Activated CD4-positive, alpha-beta T cell treated with anti-CD3 and anti-CD28 coated beads, Interleukin-2, amount 10 ng/mL, durations not matched to agents 7 days and 5 days (primary cell): ENCODE measurements at regions of chr6 and their contacts with region 1.

Region 1: DNA sequence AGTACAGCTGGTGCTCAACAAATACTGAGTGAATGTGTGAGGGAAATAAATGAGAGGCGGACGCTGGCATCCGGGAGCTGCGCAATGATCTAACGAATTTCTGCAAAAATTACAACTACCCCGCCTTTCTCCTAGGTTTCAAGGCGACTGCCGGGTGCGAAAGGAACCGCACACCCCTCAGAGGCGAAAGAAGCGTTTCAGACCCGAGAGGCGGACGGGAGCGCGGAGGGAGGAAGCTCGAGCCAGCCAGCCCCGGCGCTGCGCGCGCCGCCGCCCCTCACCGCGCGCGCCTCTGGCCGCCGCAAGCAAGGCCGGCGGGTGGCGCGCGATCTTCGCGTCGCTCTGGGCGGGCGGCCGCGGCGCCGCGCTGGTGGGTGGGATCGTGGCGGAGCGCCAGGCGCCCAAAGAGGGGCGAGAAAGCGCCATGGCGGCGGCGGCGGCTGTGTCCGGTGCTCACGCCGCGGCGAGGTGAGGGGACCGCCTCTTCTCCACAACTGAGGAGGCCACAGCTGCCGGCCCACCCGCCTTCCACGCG is at the start of gene BLTP3A:
- DNase-seq: peak; percentile 72
- H3K4me3 Mint-ChIP-seq: peak within 1 kb of the TSS; percentile 89
- H3K27ac Mint-ChIP-seq: peak within 1 kb of the TSS; percentile 97
- H3K4me1 Mint-ChIP-seq: peaks cover 17% of the 10 kb centered on the region
- H3K27me3 Mint-ChIP-seq: no peaks in the 10 kb centered on the region
- total RNA-seq, gene BLTP3A: 11.4 to 13.8 TPM

Region 2: GRCh38 chr6:34773916-34774315 is 17.9 kb before region 1 on chr6:
- CTCF ChIA-PET with region 1: interaction called, 15 read pairs
- POLR2A ChIA-PET with region 1: no interaction called
- DNase-seq: no peak
- H3K4me3 Mint-ChIP-seq: no peak overlapping the region
- H3K27ac Mint-ChIP-seq: no peak overlapping the region
- H3K4me1 Mint-ChIP-seq: peaks cover 23% of the 10 kb centered on the region
- H3K27me3 Mint-ChIP-seq: no peaks in the 10 kb centered on the region

Region 3: GRCh38 chr6:34805050-34805449 is 13.3 kb after region 1 on chr6:
- CTCF ChIA-PET with region 1: interaction called, 12 read pairs
- POLR2A ChIA-PET with region 1: no interaction called
- DNase-seq: no peak
- H3K4me3 Mint-ChIP-seq: no peak overlapping the region
- H3K27ac Mint-ChIP-seq: no peak overlapping the region
- H3K4me1 Mint-ChIP-seq: peaks cover under 1% of the 10 kb centered on the region
- H3K27me3 Mint-ChIP-seq: no peaks in the 10 kb centered on the region